ENCODE measurements at regions of chr17 and their contacts with region 1.

Region 1: GRCh38 chr17:48084932-48085444 is 16.3 kb downstream of the CBX1 start:
- DNase-seq: no peak
- H3K4me3 ChIP-seq: no peak overlapping the region
- H3K4me3 Mint-ChIP-seq: no peak overlapping the region
- H3K27ac ChIP-seq: no peak overlapping the region
- H3K27ac Mint-ChIP-seq: no peak overlapping the region
- H3K4me1 ChIP-seq: no peaks in the 10 kb centered on the region
- H3K4me1 Mint-ChIP-seq: peaks cover 4 to 14% (median 8%) of the 10 kb centered on the region in 3 donors
- H3K27me3 ChIP-seq: no peaks in the 10 kb centered on the region
- H3K27me3 Mint-ChIP-seq: no peaks in the 10 kb centered on the region

Region 2: DNA sequence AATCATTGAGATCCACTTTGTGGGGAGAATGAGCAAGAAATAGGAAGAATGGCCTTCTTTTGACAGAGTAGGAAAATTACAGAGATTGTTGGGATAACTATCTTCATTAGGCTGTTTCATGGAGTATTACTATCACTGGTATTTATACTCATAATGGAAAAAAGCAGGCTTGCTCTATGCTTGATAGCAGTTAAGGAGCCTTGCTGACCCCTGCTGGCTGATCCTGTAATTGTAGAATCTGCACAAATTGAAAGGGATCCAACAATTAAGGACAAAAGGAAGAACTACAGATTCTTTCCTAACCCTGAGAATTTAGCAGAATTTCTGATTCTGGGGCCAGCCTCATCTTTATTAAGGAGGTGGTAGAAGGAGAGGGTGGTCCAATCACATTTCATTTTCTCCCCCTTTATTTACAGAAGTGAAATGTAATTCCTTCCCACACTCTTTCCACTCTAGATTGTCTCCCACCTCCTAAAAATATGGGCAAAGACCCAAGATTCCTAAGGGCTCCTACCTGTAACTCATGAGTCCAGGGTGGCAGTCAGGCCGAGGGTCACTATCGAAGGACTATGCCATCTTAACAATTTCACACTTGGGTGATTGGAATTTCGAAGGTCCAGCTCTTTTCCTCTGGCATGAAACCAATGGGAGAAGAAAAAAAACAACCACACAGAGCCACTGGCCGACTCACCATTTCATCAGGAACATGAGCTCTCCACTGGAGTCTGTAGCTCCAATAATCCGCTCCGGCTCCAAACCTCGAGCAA is 10.5 kb before region 1 on chr17:
- CTCF ChIA-PET with region 1: interaction called, 16 read pairs
- POLR2A ChIA-PET with region 1: no interaction called
- DNase-seq: peak; percentile 60 to 80 (median 67)
- H3K4me3 ChIP-seq: no peak overlapping the region
- H3K4me3 Mint-ChIP-seq: no peak overlapping the region
- H3K27ac ChIP-seq: no peak overlapping the region
- H3K27ac Mint-ChIP-seq: no peak overlapping the region
- H3K4me1 ChIP-seq: no peaks in the 10 kb centered on the region
- H3K4me1 Mint-ChIP-seq: no peaks in the 10 kb centered on the region
- H3K27me3 ChIP-seq: no peaks in the 10 kb centered on the region
- H3K27me3 Mint-ChIP-seq: no peaks in the 10 kb centered on the region

Region 3: GRCh38 chr17:48107168-48108132 is 22.5 kb after region 1 on chr17 and contains the start of gene SNX11:
- CTCF ChIA-PET with region 1: interaction called, 23 read pairs
- POLR2A ChIA-PET with region 1: no interaction called
- DNase-seq: peak; percentile 90 to 96 (median 95)
- H3K4me3 ChIP-seq: peak within 1 kb of the TSS; percentile 96
- H3K4me3 Mint-ChIP-seq: peak within 1 kb of the TSS; percentile 92 to 100 (median 97)
- H3K27ac ChIP-seq: peak within 1 kb of the TSS; percentile 80
- H3K27ac Mint-ChIP-seq: peak within 1 kb of the TSS; percentile 86 to 97 (median 92)
- H3K4me1 ChIP-seq: peaks cover 18% of the 10 kb centered on the region
- H3K4me1 Mint-ChIP-seq: peaks cover 51 to 70% (median 66%) of the 10 kb centered on the region in 3 donors
- H3K27me3 ChIP-seq: no peaks in the 10 kb centered on the region
- H3K27me3 Mint-ChIP-seq: peaks cover 0 to 2% of the 10 kb centered on the region in 2 donors
- total RNA-seq, gene SNX11: 43.3 to 45.2 TPM

Region 4: DNA sequence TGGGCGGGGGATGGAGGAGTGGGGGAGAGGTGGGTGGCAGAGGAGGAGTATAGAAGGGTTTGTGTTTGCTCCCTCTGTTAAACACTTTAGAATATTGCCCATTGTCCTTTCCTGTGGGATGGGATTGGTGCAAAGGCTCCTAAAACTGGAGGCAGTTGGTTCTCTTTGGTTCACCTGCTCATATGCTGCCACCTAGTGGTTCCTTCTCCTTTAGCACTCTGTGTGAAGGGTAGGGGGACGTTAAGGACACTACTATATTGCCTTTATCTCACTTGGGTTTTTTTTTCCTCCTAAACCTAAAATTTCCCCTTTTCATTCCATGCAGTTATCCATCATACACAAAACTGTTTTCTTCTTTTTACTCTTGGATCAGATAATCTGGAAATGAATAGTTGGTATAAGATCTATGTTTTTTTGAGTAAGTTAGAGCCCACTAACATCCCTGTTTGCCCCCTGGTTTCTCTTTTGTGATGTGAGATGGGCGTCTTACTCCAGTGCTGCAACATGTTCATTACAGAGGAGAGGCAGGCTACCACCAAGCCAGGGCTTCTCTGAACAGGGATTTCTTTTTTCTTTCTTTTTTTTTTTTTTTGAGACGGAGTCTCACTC is 46.3 kb after region 1 on chr17:
- CTCF ChIA-PET with region 1: interaction called, 40 read pairs
- POLR2A ChIA-PET with region 1: no interaction called
- DNase-seq: peak; percentile 10 to 61 (median 35)
- H3K4me3 ChIP-seq: no peak overlapping the region
- H3K4me3 Mint-ChIP-seq: no peak overlapping the region
- H3K27ac ChIP-seq: no peak overlapping the region
- H3K27ac Mint-ChIP-seq: peak overlapping the region in 7 of 8 donors; percentile 10 to 86 (median 34)
- H3K4me1 ChIP-seq: no peaks in the 10 kb centered on the region
- H3K4me1 Mint-ChIP-seq: peaks cover 0 to 1% (median 0%) of the 10 kb centered on the region in 3 donors
- H3K27me3 ChIP-seq: no peaks in the 10 kb centered on the region
- H3K27me3 Mint-ChIP-seq: no peaks in the 10 kb centered on the region

Measured in CD8-positive, alpha-beta memory T cell (primary cell).